Activated CD4-positive, alpha-beta memory T cell treated with anti-CD3 and anti-CD28 coated beads for 36 hours (primary cell): ENCODE measurements at regions of chr17 and their contacts with region 1.

Region 1: DNA sequence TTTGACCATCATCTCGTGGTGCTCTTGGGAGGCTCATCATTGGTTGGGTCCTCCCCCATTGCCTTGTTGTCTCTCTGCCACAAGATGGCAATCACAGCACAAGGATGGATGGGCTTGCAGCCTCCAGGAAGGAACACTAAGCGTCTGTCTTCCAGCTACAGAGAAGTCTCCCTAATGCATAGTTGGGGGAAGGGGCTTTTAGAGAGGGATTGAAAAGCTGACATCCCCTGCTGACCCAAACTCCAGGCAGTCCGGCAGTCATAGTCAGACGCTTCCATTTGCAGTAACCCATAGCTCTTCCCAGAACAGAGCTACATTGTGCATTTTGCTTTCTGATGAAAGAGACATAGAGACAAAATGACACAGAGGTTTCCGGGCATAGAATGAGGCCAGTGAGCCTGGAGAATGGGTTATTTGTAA is 111.4 kb downstream of the UTP18 start:
- DNase-seq: peak; percentile 70
- H3K4me3 Mint-ChIP-seq: peak overlapping the region; percentile 1
- H3K27ac Mint-ChIP-seq: no peak overlapping the region
- H3K4me1 Mint-ChIP-seq: peaks cover 14% of the 10 kb centered on the region
- H3K27me3 Mint-ChIP-seq: no peaks in the 10 kb centered on the region

Region 2: DNA sequence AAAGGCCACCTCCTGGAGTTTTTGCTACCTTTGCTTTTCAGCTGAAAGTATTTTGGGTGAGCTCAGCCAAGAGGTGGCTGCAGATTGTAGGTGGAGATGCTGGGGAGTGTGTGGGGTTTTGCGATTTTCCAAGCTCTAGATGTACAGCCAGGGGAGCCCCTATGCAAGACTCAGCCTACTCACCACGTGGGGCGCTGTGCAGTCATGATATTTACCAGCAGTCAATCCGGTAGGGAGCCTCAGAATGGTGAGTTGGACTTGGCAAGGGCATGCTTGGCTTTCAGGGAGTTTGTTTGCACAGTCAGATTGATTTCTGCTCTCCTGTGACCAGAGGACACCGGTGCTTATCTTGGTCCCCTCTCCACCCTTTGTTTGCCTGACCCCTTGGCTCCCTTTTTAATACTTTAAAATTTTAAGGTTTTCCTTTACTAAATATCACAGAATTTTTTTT is 63.9 kb after region 1 on chr17:
- CTCF ChIA-PET with region 1: interaction called, 7 read pairs
- POLR2A ChIA-PET with region 1: no interaction called
- intact Hi-C with region 1: loop called (anchors 1 kb)
- DNase-seq: peak; percentile 80
- H3K4me3 Mint-ChIP-seq: peak overlapping the region; percentile 58
- H3K27ac Mint-ChIP-seq: peak overlapping the region; percentile 79
- H3K4me1 Mint-ChIP-seq: peaks cover 45% of the 10 kb centered on the region
- H3K27me3 Mint-ChIP-seq: no peaks in the 10 kb centered on the region

Region 3: DNA sequence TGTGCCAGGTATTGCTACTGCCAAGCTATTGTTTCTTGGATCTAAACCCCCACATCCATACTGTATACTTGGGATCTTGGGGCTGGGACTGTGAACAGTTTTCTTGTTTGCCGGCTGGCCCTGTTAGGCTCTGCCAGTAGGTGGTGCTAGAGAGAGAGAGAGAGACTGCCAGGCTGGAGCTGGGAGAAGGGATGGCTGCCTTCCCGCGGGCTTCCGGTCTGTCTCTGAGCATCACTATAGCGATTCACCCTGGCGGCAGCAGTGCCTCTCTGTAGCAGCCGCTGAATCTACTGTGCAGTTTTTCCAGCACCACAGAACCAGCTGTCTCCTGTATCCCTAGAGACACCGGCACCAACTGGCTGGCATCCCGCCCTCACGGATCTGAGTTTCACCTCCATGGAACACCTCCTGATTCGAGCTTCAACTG is 89.8 kb after region 1 on chr17:
- CTCF ChIA-PET with region 1: interaction called, 11 read pairs
- POLR2A ChIA-PET with region 1: interaction called, 3 read pairs
- intact Hi-C with region 1: no loop called
- DNase-seq: peak; percentile 72
- H3K4me3 Mint-ChIP-seq: no peak overlapping the region
- H3K27ac Mint-ChIP-seq: no peak overlapping the region
- H3K4me1 Mint-ChIP-seq: no peaks in the 10 kb centered on the region
- H3K27me3 Mint-ChIP-seq: no peaks in the 10 kb centered on the region

Region 4: GRCh38 chr17:51640108-51640622 is 268.4 kb after region 1 on chr17:
- CTCF ChIA-PET with region 1: interaction called, 19 read pairs
- POLR2A ChIA-PET with region 1: no interaction called
- intact Hi-C with region 1: no loop called
- DNase-seq: peak; percentile 19
- H3K4me3 Mint-ChIP-seq: no peak overlapping the region
- H3K27ac Mint-ChIP-seq: no peak overlapping the region
- H3K4me1 Mint-ChIP-seq: no peaks in the 10 kb centered on the region
- H3K27me3 Mint-ChIP-seq: peaks cover 12% of the 10 kb centered on the region